A673 (cell line): ENCODE measurements at regions of chr2 and their contacts with region 1.

Region 1: DNA sequence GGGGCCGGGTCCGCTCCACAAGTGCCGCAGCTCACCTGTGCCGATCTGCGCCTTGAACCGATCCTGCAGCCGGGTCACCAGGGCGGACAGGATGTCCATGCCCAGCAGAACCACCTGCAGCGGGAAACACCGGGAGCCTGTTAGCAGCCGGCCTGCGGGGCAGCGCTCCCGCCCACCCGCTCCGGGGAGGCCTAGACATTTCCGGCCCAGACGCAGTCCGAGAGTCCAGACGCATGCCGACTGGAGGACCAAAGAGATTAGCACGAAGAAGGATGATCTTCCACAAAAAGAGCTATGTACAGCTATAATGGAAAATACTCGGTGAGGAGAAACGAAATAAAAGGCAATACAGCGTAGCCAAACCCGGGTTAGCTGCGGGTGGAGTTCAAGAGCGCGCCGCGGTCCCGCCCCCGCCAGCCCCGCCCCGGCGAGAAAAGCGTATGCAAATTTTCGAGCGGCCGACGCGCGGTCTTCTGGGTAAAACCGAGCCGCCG is 421 bp upstream of the RNU4ATAC start:
- DNase-seq: peak; percentile 87
- H3K4me3 ChIP-seq: peak overlapping the region; percentile 77
- H3K27ac ChIP-seq: peak overlapping the region; percentile 99
- H3K4me1 ChIP-seq: peaks cover 32% of the 10 kb centered on the region
- H3K27me3 ChIP-seq: no peaks in the 10 kb centered on the region
- CTCF ChIP-seq: no peak

Region 2: DNA sequence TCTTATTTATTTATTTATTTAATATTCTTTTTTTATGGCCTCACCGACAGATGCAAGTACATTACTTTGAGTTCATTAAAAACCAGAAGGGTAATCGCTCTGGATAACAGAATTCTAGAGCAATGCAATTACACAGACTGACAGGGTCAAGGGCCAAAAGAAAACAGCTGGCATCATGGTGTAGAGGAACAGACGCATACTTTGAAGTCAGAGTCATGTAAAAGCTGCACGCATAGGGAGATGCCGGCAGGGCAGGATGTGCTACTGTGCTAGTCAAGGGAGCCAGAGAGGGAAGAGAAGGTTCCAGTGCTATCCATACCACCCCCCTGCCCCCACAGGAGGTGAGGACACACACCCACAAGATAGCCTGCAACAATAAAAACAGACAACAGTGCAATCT is 130.1 kb before region 1 on chr2:
- CTCF ChIA-PET with region 1: interaction called, 3 read pairs
- POLR2A ChIA-PET with region 1: interaction called, 20 read pairs
- intact Hi-C with region 1: loop called (anchors 2 kb)
- DNase-seq: no peak
- H3K4me3 ChIP-seq: no peak overlapping the region
- H3K27ac ChIP-seq: no peak overlapping the region
- H3K4me1 ChIP-seq: no peaks in the 10 kb centered on the region
- H3K27me3 ChIP-seq: no peaks in the 10 kb centered on the region
- CTCF ChIP-seq: no peak

Region 3: GRCh38 chr2:121649596-121650314 is 119.5 kb after region 1 on chr2:
- CTCF ChIA-PET with region 1: interaction called, 5 read pairs
- POLR2A ChIA-PET with region 1: interaction called, 4 read pairs
- intact Hi-C with region 1: loop called (anchors 1 kb)
- DNase-seq: peak; percentile 99
- H3K4me3 ChIP-seq: peak overlapping the region; percentile 97
- H3K27ac ChIP-seq: peak overlapping the region; percentile 93
- H3K4me1 ChIP-seq: peaks cover 5% of the 10 kb centered on the region
- H3K27me3 ChIP-seq: no peaks in the 10 kb centered on the region
- CTCF ChIP-seq: no peak

Region 4: GRCh38 chr2:121722479-121722878 is 192.2 kb after region 1 on chr2:
- CTCF ChIA-PET with region 1: interaction called, 6 read pairs
- POLR2A ChIA-PET with region 1: interaction called, 3 read pairs
- intact Hi-C with region 1: loop called (anchors 1 kb)
- DNase-seq: no peak
- H3K4me3 ChIP-seq: no peak overlapping the region
- H3K27ac ChIP-seq: no peak overlapping the region
- H3K4me1 ChIP-seq: no peaks in the 10 kb centered on the region
- H3K27me3 ChIP-seq: no peaks in the 10 kb centered on the region
- CTCF ChIP-seq: no peak

Region 5: GRCh38 chr2:121736462-121737341 is 206.4 kb after region 1 on chr2 and contains the start of gene NIFK:
- CTCF ChIA-PET with region 1: no interaction called
- POLR2A ChIA-PET with region 1: no interaction called
- intact Hi-C with region 1: loop called (anchors 5 kb)
- DNase-seq: peak; percentile 99
- H3K4me3 ChIP-seq: peak within 1 kb of the TSS; percentile 72
- H3K27ac ChIP-seq: peak within 1 kb of the TSS; percentile 74
- H3K4me1 ChIP-seq: peaks cover 3% of the 10 kb centered on the region
- H3K27me3 ChIP-seq: no peaks in the 10 kb centered on the region
- CTCF ChIP-seq: no peak
- total RNA-seq, gene NIFK: 84.2 and 97.4 TPM in 2 replicates

Region 6: GRCh38 chr2:121755236-121756111 is 225.2 kb after region 1 on chr2 and contains the start of gene TSN:
- CTCF ChIA-PET with region 1: interaction called, 4 read pairs
- POLR2A ChIA-PET with region 1: interaction called, 12 read pairs
- intact Hi-C with region 1: no loop called
- DNase-seq: peak; percentile 99
- H3K4me3 ChIP-seq: peak within 1 kb of the TSS; percentile 78
- H3K27ac ChIP-seq: peak within 1 kb of the TSS; percentile 82
- H3K4me1 ChIP-seq: peaks cover 18% of the 10 kb centered on the region
- H3K27me3 ChIP-seq: no peaks in the 10 kb centered on the region
- CTCF ChIP-seq: no peak
- total RNA-seq, gene TSN: 110 and 112 TPM in 2 replicates